ENCODE measurements at regions of chr2 and their contacts with region 1.

Region 1: DNA sequence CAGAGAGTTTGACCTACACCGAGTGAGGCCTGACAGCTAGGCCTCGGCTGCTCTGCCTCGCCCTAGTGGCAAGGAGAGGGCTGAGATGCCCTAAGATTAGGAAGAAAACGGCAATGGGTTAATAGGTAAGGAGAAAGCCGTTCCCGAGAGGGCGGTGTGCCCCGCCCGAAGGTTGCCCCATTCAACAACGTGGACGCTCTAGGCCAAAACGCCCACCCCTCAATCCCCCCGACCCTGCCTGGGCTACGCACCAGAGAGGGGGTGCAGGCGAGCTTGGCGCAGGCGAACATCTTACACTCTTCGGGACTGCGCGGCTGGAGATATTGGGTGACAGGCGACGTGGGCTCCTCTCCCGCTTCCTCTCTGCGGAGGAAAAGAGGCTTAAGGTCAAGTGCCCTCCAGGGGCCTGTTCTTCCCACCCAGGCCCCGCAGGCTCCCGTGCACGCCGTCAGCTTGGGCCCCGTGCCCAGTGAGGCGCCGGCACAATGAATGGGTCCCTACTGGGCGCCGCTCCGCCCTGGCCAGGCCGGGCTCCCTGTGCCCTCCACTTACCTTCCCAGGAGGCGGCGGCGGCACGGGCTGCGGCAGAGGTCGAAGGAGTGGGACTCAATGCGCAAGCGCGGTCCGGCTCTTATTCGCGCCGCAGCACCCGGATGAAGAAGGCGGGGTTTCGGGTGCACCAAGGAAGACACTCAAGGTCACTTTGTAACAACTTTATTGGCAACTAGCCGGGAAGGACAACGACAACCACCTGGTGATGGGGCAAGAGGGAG is at the start of gene ATP5MC3:
- DNase-seq: peak; percentile 97
- H3K4me3 ChIP-seq: peak within 1 kb of the TSS; percentile 85
- H3K27ac ChIP-seq: peak within 1 kb of the TSS; percentile 67
- H3K4me1 ChIP-seq: peaks cover 31% of the 10 kb centered on the region
- CTCF ChIP-seq: peak; percentile 42; the same call in 1 of the 2 replicates
- total RNA-seq, gene ATP5MC3: 149 and 161 TPM in 2 replicates

Region 2: GRCh38 chr2:175030380-175031271 is 150.7 kb before region 1 on chr2:
- CTCF ChIA-PET with region 1: no interaction called
- POLR2A ChIA-PET with region 1: no interaction called
- intact Hi-C with region 1: loop called (anchors 10 kb)
- DNase-seq: peak; percentile 35
- H3K4me3 ChIP-seq: no peak overlapping the region
- H3K27ac ChIP-seq: no peak overlapping the region
- H3K4me1 ChIP-seq: no peaks in the 10 kb centered on the region
- CTCF ChIP-seq: peak; percentile 60

Region 3: GRCh38 chr2:175111200-175111657 is 70.1 kb before region 1 on chr2:
- CTCF ChIA-PET with region 1: no interaction called
- POLR2A ChIA-PET with region 1: interaction called, 3 read pairs
- intact Hi-C with region 1: loop called (anchors 5 kb)
- DNase-seq: peak; percentile 57
- H3K4me3 ChIP-seq: no peak overlapping the region
- H3K27ac ChIP-seq: no peak overlapping the region
- H3K4me1 ChIP-seq: no peaks in the 10 kb centered on the region
- CTCF ChIP-seq: peak; percentile 88

Region 4: DNA sequence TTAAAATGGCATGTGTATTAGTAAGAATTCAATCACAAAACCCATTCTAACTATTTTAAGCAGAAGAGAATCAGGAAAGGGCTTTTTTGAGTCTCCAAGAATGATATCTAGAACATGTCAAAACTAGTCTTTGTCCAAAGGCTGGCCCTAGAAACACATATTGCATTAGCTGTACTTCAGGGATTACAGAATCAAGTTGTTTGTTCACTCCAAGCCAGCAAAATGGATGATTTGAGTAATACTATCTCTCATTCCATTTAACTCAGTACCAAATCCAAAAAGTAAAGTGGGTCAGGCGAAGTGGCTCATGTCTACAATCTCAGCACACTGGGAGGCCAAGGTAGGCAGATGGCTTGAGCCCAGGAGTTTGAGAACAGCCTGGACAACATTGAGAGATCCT is 54.6 kb before region 1 on chr2:
- CTCF ChIA-PET with region 1: no interaction called
- POLR2A ChIA-PET with region 1: no interaction called
- intact Hi-C with region 1: no loop called
- DNase-seq: no peak
- H3K4me3 ChIP-seq: no peak overlapping the region
- H3K27ac ChIP-seq: no peak overlapping the region
- H3K4me1 ChIP-seq: no peaks in the 10 kb centered on the region
- CTCF ChIP-seq: no peak

Region 5: DNA sequence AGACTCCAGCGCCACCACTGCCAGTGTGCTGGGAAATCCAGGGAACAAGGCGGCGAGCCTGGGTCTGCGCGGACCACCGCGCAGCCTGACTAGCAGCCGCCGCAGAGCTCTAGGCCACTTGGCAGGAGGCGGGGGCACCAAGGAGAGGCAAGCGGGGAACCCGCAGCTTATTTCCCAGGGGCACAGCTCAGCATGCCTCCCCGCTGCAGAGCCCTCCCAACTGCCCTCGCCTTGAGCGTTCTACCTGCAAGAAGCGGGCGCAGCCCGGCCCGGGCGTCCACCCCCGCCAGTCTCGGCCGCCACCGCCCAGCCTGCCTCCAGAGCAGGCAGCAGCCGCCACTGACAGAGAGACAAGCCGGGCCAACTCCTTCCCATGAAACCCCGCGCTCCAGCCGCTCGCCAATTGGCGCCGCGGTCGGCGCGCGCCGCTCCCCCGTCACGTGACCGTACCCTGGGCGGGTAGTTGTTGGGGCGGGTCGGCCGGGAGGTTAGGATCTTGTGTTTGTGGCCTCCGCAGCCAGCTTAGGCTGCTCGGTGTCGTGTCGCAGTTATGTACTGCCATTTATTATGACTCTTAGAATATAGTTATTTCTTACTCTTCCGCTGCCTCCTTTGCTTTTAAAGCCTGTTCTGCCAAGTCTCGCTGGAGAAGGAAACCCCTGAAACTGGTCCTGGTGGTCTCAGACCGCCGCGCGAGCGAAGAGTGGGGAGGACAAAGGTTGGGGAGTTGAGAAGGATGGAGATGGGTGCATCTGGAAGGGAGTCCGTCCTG is 820.8 kb after region 1 on chr2 and contains the start of gene LNPK:
- CTCF ChIA-PET with region 1: no interaction called
- POLR2A ChIA-PET with region 1: no interaction called
- intact Hi-C with region 1: loop called (anchors 10 kb)
- DNase-seq: peak; percentile 89
- H3K4me3 ChIP-seq: peak within 1 kb of the TSS; percentile 95
- H3K27ac ChIP-seq: peak within 1 kb of the TSS; percentile 42
- H3K4me1 ChIP-seq: peaks cover 19% of the 10 kb centered on the region
- CTCF ChIP-seq: no peak
- total RNA-seq, gene LNPK: 14.0 and 18.0 TPM in 2 replicates